ENCODE measurements at regions of chr17 and their contacts with region 1.

Region 1: DNA sequence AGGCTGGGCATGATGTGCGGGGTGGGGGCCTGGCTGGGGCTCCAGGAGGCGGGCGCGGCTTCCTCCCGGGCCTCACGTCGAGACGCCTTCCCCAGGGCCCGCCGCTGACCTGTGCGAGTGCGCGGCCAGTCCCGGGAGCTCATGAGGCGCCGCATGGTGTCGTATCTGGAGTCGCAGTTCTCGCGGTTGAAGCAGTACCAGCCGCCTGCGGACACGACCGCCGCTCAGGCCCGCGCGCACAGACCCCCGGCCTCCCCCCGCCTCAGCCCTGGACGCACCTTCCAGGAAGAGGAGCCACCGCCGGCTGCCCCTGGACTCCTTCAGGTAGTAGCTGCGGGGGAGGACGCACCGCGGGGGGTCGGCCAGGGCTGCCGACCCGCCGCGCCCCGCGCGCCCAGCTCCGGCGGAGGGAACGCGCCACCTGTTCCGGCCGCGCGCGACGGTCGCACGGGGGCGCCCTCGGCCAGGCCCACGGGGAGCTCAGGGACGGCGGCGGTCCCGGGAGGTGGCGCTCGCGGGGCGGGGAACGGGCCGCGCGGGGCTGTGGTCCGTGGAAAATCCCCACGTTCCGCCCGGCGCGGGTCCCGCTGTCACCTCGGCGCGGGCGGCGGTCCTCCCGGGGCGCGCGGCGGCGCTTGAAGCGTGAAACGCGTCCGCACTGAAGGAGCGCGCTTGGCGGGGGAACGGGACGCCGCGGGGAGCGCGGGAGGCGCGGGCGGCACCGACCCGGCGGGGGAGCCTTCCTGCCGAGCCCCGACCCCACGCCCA is 1.4 kb downstream of the NOTUM start:
- DNase-seq: peak; percentile 74
- ATAC-seq: peak; percentile 87 to 95

Region 2: GRCh38 chr17:82013341-82013740 is 53.8 kb after region 1 on chr17:
- intact Hi-C with region 1: loop called in 1 of 2 experiments (anchors 5 kb)
- DNase-seq: no peak
- ATAC-seq: peak; percentile 16 to 44

Region 3: DNA sequence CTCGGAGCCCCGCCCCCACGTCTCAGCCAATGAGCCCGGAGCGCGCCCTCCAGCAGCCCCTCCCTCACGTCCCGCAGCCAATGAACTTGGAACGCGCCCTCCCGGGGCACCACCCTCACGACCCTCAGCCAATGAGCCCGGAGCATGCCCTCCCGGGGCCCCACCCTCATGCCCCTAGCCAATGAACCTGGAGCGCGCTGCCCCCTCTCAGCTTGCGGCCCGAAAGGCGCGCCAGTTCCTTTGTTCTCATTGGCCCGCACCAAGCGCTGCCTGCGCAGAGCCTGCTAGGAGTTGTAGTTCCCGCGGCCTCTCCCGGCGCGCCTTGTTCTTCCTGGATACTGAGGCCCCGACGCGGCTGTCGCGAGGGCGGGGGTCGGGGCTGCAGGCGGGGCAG is 63.4 kb after region 1 on chr17 and contains the start of gene LRRC45:
- intact Hi-C with region 1: loop called (anchors 1 to 5 kb)
- DNase-seq: peak; percentile 100
- ATAC-seq: peak; percentile 96 to 97
- total RNA-seq, gene LRRC45: 3.7 to 7.9 TPM

Region 4: DNA sequence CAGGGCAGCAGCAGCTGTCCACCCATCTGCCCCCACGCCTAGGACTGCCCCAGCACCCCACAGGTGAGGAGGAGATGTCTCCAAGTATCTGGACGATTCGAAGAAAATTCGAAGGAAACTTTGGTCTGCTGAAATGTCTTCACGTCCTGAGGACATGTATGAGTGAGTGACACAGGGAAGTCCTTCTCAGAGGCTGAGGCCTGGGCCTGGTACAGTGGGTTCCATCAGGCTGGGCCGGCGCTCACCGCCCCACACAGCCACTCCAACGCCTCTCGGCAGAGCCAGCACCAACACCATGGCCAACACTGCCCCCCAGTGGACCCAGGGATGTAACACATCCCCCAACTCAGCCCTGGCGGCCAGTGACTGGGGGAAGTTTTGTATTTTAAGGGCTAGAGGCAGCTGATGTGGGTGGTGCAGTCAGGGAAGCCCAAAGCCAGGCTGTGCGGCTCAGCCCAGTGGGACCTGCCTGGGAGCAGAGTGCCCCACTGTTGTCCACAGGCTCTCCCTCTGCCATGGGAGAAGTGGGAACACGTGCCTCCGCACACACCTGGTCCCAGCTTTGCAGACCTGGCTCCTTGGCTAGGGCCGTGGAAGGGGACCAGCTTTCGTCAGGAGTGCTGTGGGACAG is 194.3 kb after region 1 on chr17:
- intact Hi-C with region 1: loop called (anchors 10 kb)
- DNase-seq: peak; percentile 83
- ATAC-seq: peak; percentile 92 to 93

Measured in left cardiac atrium (tissue), 4 donors.